Left lung (tissue), 14 donors: ENCODE measurements at regions of chr6 and their contacts with region 1.

Region 1: DNA sequence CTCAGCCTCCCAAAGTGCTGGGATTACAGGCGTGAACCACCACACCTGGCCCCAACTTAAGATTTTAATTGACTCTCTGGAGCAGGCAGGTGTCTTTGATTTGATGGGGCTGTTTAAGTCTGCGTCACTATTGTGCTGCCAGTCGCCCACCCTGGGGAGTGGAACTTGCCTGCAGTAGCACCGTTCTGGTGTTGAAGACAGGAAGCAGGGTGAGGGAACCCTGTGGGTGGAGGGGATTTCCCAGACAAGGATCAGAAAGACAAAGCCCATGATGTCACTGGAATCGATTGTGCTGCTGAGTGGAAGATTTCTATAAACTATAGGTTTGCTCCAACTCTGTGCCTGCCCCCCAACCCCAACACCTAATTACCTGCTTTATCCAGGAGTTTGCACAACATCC is 11.0 kb downstream of the ALDH8A1 start:
- DNase-seq: no peak
- ATAC-seq: no peak
- H3K4me3 ChIP-seq: no peak overlapping the region
- H3K27ac ChIP-seq: no peak overlapping the region
- H3K4me1 ChIP-seq: no peaks in the 10 kb centered on the region
- H3K27me3 ChIP-seq: no peaks in the 10 kb centered on the region
- CTCF ChIP-seq: no peak

Region 2: GRCh38 chr6:134152767-134153485 is 786.0 kb before region 1 on chr6:
- intact Hi-C with region 1: loop called in 1 of 2 experiments (anchors 10 kb)
- DNase-seq: no peak
- ATAC-seq: no peak
- H3K4me3 ChIP-seq: no peak overlapping the region
- H3K27ac ChIP-seq: no peak overlapping the region
- H3K4me1 ChIP-seq: no peaks in the 10 kb centered on the region
- H3K27me3 ChIP-seq: no peaks in the 10 kb centered on the region
- CTCF ChIP-seq: no peak

Region 3: GRCh38 chr6:135346747-135347146 is 407.9 kb after region 1 on chr6:
- intact Hi-C with region 1: no loop called
- DNase-seq: no peak
- ATAC-seq: no peak
- H3K4me3 ChIP-seq: no peak overlapping the region
- H3K27ac ChIP-seq: no peak overlapping the region
- H3K4me1 ChIP-seq: no peaks in the 10 kb centered on the region
- H3K27me3 ChIP-seq: no peaks in the 10 kb centered on the region
- CTCF ChIP-seq: no peak